ENCODE measurements at regions of chr2 and their contacts with region 1.

Region 1: GRCh38 chr2:62306751-62307468 is 111.0 kb downstream of the B3GNT2 start:
- DNase-seq: peak; percentile 84
- ATAC-seq: peak; percentile 28
- H3K4me3 Mint-ChIP-seq: peak overlapping the region; percentile 66
- H3K27ac Mint-ChIP-seq: peak overlapping the region; percentile 98
- H3K4me1 Mint-ChIP-seq: peaks cover 90% of the 10 kb centered on the region
- H3K27me3 Mint-ChIP-seq: peaks cover 2% of the 10 kb centered on the region
- CTCF ChIP-seq: no peak

Region 2: GRCh38 chr2:62038975-62039771 is 267.7 kb before region 1 on chr2:
- CTCF ChIA-PET with region 1: no interaction called
- POLR2A ChIA-PET with region 1: no interaction called
- intact Hi-C with region 1: loop called (anchors 10 kb)
- DNase-seq: peak; percentile 73
- ATAC-seq: peak; percentile 97
- H3K4me3 Mint-ChIP-seq: no peak overlapping the region
- H3K27ac Mint-ChIP-seq: peak overlapping the region; percentile 91
- H3K4me1 Mint-ChIP-seq: peaks cover 20% of the 10 kb centered on the region
- H3K27me3 Mint-ChIP-seq: no peaks in the 10 kb centered on the region
- CTCF ChIP-seq: no peak

Region 3: GRCh38 chr2:62202019-62202722 is 104.7 kb before region 1 on chr2:
- CTCF ChIA-PET with region 1: interaction called, 12 read pairs
- POLR2A ChIA-PET with region 1: interaction called, 112 read pairs
- intact Hi-C with region 1: loop called (anchors 2 kb)
- DNase-seq: peak; percentile 45
- ATAC-seq: peak; percentile 11
- H3K4me3 Mint-ChIP-seq: peak overlapping the region; percentile 96
- H3K27ac Mint-ChIP-seq: peak overlapping the region; percentile 96
- H3K4me1 Mint-ChIP-seq: peaks cover 84% of the 10 kb centered on the region
- H3K27me3 Mint-ChIP-seq: no peaks in the 10 kb centered on the region
- CTCF ChIP-seq: no peak

Region 4: GRCh38 chr2:62208759-62209114 is 98.2 kb before region 1 on chr2:
- CTCF ChIA-PET with region 1: no interaction called
- POLR2A ChIA-PET with region 1: interaction called, 112 read pairs
- intact Hi-C with region 1: no loop called
- DNase-seq: peak; percentile 79
- ATAC-seq: peak; percentile 80
- H3K4me3 Mint-ChIP-seq: no peak overlapping the region
- H3K27ac Mint-ChIP-seq: peak overlapping the region; percentile 82
- H3K4me1 Mint-ChIP-seq: peaks cover 92% of the 10 kb centered on the region
- H3K27me3 Mint-ChIP-seq: no peaks in the 10 kb centered on the region
- CTCF ChIP-seq: no peak